ENCODE measurements at regions of chr1 and their contacts with region 1.

Region 1: DNA sequence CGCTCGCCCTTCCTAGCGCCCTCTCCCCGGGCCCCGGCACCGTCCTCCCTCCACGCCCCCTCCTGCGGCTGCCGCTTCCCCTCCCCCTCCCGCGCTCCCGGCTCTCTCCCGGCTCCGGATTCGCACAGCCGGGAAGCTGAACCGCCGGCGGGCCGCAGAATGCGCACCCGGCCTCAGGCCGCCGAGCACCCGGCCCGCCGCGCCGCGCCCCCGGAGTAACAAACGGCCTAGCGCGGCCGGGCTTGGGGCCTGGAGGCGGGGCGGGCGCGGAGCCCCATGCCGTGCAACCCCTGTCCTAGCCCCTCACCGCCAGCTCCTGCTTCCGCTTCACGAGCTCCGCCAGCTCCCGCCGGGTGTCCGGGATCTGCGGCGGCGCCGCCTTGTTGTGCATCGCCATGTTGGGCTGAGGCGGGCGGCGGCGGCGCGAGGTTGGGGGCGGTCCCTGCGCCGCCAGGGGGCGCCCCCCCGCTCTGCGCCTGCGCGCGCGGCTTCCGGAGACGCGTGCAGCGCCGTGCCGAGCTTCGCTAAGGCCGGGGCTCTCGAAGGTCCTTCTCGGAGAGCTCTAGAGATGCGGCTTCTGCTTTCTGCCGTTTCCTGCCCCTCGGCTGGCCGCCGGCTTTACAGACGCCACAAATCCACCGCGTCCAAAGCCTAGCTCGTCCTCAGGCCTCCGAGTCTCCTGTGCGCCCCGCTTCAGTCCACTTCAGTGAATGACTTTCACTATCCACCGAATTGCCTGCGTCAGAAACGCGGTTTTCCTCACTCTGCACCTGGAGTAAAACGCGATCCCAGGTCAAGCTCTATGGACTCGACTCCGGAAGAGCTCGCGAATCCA is at the start of gene MEAF6:
- DNase-seq: peak; percentile 81
- ATAC-seq: peak; percentile 93
- H3K4me3 Mint-ChIP-seq: peak within 1 kb of the TSS; percentile 98
- H3K27ac Mint-ChIP-seq: peak within 1 kb of the TSS; percentile 97
- H3K4me1 Mint-ChIP-seq: peaks cover 26% of the 10 kb centered on the region
- H3K27me3 Mint-ChIP-seq: 0 out of 2 replicates have a peak, but pooled peaks cover 6% of the 10 kb centered on the region
- CTCF ChIP-seq: peak; percentile 76
- total RNA-seq, gene MEAF6: 37.4 to 41.3 TPM (median 41.0 TPM) in 3 replicates

Region 2: GRCh38 chr1:37449936-37450335 is 64.6 kb before region 1 on chr1:
- CTCF ChIA-PET with region 1: interaction called, 24 read pairs
- POLR2A ChIA-PET with region 1: no interaction called
- DNase-seq: no peak
- ATAC-seq: no peak
- H3K4me3 Mint-ChIP-seq: no peak overlapping the region
- H3K27ac Mint-ChIP-seq: no peak overlapping the region
- H3K4me1 Mint-ChIP-seq: peaks cover 61% of the 10 kb centered on the region
- H3K27me3 Mint-ChIP-seq: peaks cover 5% of the 10 kb centered on the region
- CTCF ChIP-seq: no peak

Region 3: DNA sequence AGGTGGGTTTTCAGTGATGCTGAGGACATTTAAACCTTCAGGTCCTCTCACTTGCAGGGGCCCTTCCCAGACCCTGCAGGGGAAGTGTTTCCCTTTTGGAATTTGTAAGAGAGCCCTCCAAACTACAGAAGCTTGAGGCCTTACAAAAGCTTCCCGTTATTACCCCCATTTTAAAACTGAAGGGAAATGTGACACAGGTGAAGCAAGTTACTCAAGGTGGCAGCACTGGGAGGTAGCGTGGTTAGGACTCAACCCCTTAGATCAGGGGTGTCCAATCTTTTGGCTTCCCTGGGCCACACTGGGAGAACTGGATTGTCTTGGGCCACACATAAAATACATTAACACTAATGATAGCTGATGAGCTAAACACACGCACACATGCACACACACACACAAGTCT is 56.0 kb before region 1 on chr1:
- CTCF ChIA-PET with region 1: interaction called, 24 read pairs
- POLR2A ChIA-PET with region 1: interaction called, 4 read pairs
- DNase-seq: no peak
- ATAC-seq: peak; percentile 59
- H3K4me3 Mint-ChIP-seq: no peak overlapping the region
- H3K27ac Mint-ChIP-seq: no peak overlapping the region
- H3K4me1 Mint-ChIP-seq: peaks cover 12% of the 10 kb centered on the region
- H3K27me3 Mint-ChIP-seq: no peaks in the 10 kb centered on the region
- CTCF ChIP-seq: no peak

Region 4: GRCh38 chr1:37474046-37474759 is 40.4 kb before region 1 on chr1 and contains the start of gene ZC3H12A:
- CTCF ChIA-PET with region 1: interaction called, 30 read pairs
- POLR2A ChIA-PET with region 1: interaction called, 3 read pairs
- DNase-seq: peak; percentile 83
- ATAC-seq: peak; percentile 67
- H3K4me3 Mint-ChIP-seq: peak within 1 kb of the TSS; percentile 73
- H3K27ac Mint-ChIP-seq: peak within 1 kb of the TSS; percentile 27; the same call in 1 of the 2 replicates
- H3K4me1 Mint-ChIP-seq: peaks cover 57% of the 10 kb centered on the region
- H3K27me3 Mint-ChIP-seq: peaks cover 23% of the 10 kb centered on the region
- CTCF ChIP-seq: no peak
- total RNA-seq, gene ZC3H12A: 8.4 to 10.9 TPM (median 9.6 TPM) in 3 replicates

Region 5: GRCh38 chr1:37498872-37499617 is 15.5 kb before region 1 on chr1:
- CTCF ChIA-PET with region 1: interaction called, 11 read pairs
- POLR2A ChIA-PET with region 1: no interaction called
- DNase-seq: no peak
- ATAC-seq: no peak
- H3K4me3 Mint-ChIP-seq: no peak overlapping the region
- H3K27ac Mint-ChIP-seq: no peak overlapping the region
- H3K4me1 Mint-ChIP-seq: no peaks in the 10 kb centered on the region
- H3K27me3 Mint-ChIP-seq: no peaks in the 10 kb centered on the region
- CTCF ChIP-seq: no peak

Region 6: GRCh38 chr1:37553927-37554808 is 39.6 kb after region 1 on chr1 and contains the start of gene SNIP1:
- CTCF ChIA-PET with region 1: interaction called, 10 read pairs
- POLR2A ChIA-PET with region 1: interaction called, 5 read pairs
- DNase-seq: peak; percentile 86
- ATAC-seq: peak; percentile 49
- H3K4me3 Mint-ChIP-seq: peak within 1 kb of the TSS; percentile 98
- H3K27ac Mint-ChIP-seq: peak within 1 kb of the TSS; percentile 98
- H3K4me1 Mint-ChIP-seq: peaks cover 27% of the 10 kb centered on the region
- H3K27me3 Mint-ChIP-seq: no peaks in the 10 kb centered on the region; the same call in 1 of the 2 replicates
- CTCF ChIP-seq: no peak
- total RNA-seq, gene SNIP1: 18.3 to 19.7 TPM (median 19.1 TPM) in 3 replicates

Region 7: DNA sequence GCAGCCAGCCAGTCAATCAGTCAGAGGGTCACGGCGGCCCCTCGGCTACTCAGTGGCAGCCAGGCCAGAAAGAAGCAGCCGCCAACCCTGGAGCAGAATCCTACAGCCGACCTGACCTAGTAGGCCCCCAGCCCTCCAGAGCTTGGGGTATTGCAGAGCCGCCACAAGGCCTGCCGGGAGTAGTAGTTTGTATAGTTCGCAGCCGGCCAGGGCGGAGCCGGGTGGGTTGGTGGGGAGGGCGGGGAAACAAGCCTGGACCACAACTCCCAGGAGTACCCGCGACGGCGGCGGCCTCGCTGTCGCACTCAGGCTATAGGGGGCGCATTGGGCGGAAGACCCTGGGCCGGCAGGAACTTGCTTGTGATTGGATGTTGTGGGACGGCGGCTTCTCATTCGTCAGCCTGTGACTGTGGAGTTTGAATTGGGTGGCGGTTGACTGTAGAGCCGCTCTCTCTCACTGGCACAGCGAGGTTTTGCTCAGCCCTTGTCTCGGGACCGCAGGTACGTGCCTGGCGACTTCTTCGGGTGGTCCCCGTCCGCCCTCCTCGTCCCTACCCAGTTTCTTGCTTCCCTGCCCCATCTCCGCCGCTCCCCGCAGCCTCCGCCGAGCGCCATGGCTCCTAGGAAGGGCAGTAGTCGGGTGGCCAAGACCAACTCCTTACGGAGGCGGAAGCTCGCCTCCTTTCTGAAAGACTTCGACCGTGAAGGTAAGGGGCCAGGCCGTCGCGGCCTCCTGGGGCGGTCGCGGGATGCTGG is 177.7 kb after region 1 on chr1 and contains the start of gene CDCA8:
- CTCF ChIA-PET with region 1: interaction called, 19 read pairs
- POLR2A ChIA-PET with region 1: interaction called, 5 read pairs
- DNase-seq: peak; percentile 99
- ATAC-seq: peak; percentile 91
- H3K4me3 Mint-ChIP-seq: peak within 1 kb of the TSS; percentile 98
- H3K27ac Mint-ChIP-seq: peak within 1 kb of the TSS; percentile 78; the same call in 1 of the 2 replicates
- H3K4me1 Mint-ChIP-seq: peaks cover 16% of the 10 kb centered on the region
- H3K27me3 Mint-ChIP-seq: no peaks in the 10 kb centered on the region; the same call in 1 of the 2 replicates
- CTCF ChIP-seq: peak; percentile 27; the same call in 1 of the 2 replicates
- total RNA-seq, gene CDCA8: 42.1 to 47.7 TPM (median 43.3 TPM) in 3 replicates